Dorsolateral prefrontal cortex (tissue), 120 donors: ENCODE measurements at regions of chr16 and their contacts with region 1.

Region 1: GRCh38 chr16:88737298-88738150 is 31.2 kb downstream of the CTU2 start:
- DNase-seq: peak; percentile 41 to 85 (median 68)
- H3K4me3 ChIP-seq: peak overlapping the region in 10 of 59 donors; percentile 12 to 33 (median 23)
- H3K27ac ChIP-seq: no peak overlapping the region
- H3K27me3 ChIP-seq: no peaks in the 10 kb centered on the region
- CTCF ChIP-seq: peak in 55 of 56 donors; percentile 78 to 99 (median 97)

Region 2: DNA sequence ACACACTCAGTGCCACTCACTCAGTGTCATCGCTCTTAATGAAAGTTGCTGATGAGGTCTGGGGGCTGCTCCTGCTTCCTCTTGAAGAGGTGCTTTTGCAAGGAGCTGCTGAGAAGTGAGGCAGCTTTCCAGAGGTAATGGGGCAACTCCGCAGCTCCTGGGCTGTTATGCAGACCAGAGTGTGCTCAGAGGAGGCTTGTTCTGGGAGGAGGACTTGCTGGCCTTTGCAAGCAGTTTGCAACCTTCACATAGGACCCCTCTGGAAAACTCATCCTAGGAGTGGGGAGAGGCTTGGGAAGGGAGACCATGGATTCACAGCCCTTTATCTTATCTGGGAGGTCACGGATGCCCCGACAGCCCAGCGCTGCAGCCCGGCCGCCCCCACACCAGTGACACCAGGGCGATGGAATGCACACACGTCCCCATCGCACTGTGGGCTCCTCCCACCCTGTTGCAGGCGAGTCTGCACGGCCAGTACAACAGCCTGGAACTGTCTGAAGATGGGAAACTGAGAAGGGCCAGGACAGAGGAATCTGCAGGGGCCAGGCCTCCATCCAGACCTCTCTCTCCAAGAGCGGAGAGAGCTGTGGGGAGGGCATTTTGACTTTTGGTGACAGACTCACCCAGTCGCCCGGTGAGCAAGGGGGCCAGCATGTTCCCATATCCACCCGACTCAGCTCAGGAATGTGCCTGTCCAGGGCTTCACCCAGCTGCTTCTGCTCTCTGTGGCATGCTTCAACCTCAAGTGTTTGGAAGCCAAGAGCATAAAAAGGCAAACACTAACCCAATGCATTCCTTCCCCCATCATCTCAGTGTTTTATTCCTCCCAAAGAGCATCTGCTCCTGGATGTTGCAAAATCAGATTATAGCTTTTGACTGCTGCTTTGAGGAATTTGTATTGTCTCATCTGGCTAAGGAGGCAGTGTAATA is 433.4 kb before region 1 on chr16:
- intact Hi-C with region 1: no loop called
- DNase-seq: no peak
- H3K4me3 ChIP-seq: no peak overlapping the region
- H3K27ac ChIP-seq: no peak overlapping the region
- H3K27me3 ChIP-seq: peaks cover 0 to 2% (median 0%) of the 10 kb centered on the region in 45 donors
- CTCF ChIP-seq: no peak

Region 3: GRCh38 chr16:88803264-88803987 is 65.9 kb after region 1 on chr16 and contains the start of gene CDT1:
- intact Hi-C with region 1: loop called in 1 of 2 experiments (anchors 5 kb)
- DNase-seq: peak in 8 of 10 donors; percentile 44 to 88 (median 67)
- H3K4me3 ChIP-seq: peak within 1 kb of the TSS; percentile 43 to 84 (median 72)
- H3K27ac ChIP-seq: peak within 1 kb of the TSS in 38 of 59 donors; percentile 6 to 87 (median 57)
- H3K27me3 ChIP-seq: no peaks in the 10 kb centered on the region
- CTCF ChIP-seq: peak in 21 of 56 donors; percentile 8 to 44 (median 22)
- total RNA-seq, gene CDT1: 0.49 to 5.3 (median 2.0) TPM

Region 4: GRCh38 chr16:88815901-88816589 is 78.5 kb after region 1 on chr16:
- intact Hi-C with region 1: no loop called
- DNase-seq: peak in 1 of 10 donors; percentile 56
- H3K4me3 ChIP-seq: no peak overlapping the region
- H3K27ac ChIP-seq: no peak overlapping the region
- H3K27me3 ChIP-seq: no peaks in the 10 kb centered on the region
- CTCF ChIP-seq: peak in 54 of 56 donors; percentile 33 to 73 (median 57)

Region 5: DNA sequence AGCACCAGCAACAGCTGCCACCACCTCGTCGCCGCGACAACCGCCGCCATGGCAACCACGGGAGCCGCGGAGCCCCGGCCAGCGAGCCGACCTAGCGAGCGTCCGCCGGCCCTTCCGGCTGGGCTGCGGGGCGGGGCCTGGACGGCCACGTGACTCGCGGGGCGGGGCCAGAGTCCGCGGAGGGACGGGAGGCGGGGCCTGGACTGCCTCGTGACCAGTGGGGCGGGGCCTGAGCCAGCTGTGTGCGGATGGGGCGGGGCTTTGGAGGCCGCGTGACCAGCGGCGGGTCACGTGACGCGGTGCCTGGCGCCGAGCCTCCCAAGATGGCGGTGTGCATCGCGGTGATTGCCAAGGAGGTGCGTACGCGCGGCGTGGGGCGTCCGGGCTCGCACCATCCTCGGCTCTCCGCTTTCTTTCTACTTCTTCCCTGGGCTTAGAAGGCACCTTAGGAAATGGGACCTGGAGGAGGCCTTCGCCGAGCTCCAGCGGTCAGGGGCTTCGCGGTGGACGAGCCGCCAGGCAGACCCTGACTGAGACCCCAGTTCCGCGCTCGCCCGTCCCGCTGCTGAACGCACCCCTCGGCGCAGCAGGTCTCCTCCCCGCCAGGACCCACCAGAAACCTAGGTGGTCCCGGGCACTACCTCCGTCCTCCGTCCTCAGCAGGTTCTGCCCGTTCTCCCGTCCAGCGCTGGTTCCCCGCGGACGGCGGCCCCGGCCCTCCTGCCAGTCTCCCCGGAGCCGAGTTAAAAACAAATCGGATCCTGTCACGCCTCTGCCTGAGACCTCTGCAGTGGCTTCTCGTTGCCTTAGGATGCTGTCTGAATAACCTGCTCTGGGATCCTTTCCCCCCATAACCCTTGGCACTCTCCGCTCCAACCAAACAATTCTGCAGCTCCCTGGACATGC is 119.6 kb after region 1 on chr16 and contains the starts of genes GALNS and TRAPPC2L:
- intact Hi-C with region 1: loop called (anchors 5 to 10 kb)
- DNase-seq: peak; percentile 98 to 100 (median 99)
- H3K4me3 ChIP-seq: peak within 1 kb of the TSS; percentile 66 to 100 (median 97)
- H3K27ac ChIP-seq: peak within 1 kb of the TSS; percentile 85 to 100 (median 97)
- H3K27me3 ChIP-seq: no peaks in the 10 kb centered on the region
- CTCF ChIP-seq: peak in 8 of 56 donors; percentile 6 to 30 (median 10)
- total RNA-seq, gene GALNS: 22.5 to 60.1 (median 36.3) TPM
- total RNA-seq, gene TRAPPC2L: 30.9 to 83.9 (median 57.9) TPM

Region 6: GRCh38 chr16:89171463-89172170 is 434.1 kb after region 1 on chr16 and contains the start of gene CDH15:
- intact Hi-C with region 1: loop called (anchors 5 kb)
- DNase-seq: peak; percentile 67 to 99 (median 82)
- H3K4me3 ChIP-seq: peak within 1 kb of the TSS in 58 of 59 donors; percentile 7 to 60 (median 43)
- H3K27ac ChIP-seq: peak within 1 kb of the TSS in 1 of 59 donors; percentile 91
- H3K27me3 ChIP-seq: peaks cover 0 to 39% (median 6%) of the 10 kb centered on the region in 45 donors
- CTCF ChIP-seq: no peak
- total RNA-seq, gene CDH15: 0.16 to 0.81 (median 0.31) TPM in 14 of 120 experiments, not detected in the others

Region 7: GRCh38 chr16:89217388-89218191 is 480.1 kb after region 1 on chr16 and contains the start of gene ZNF778:
- intact Hi-C with region 1: loop called in 1 of 2 experiments (anchors 5 kb)
- DNase-seq: peak; percentile 70 to 90 (median 82)
- H3K4me3 ChIP-seq: peak within 1 kb of the TSS; percentile 60 to 100 (median 93)
- H3K27ac ChIP-seq: peak within 1 kb of the TSS; percentile 41 to 98 (median 92)
- H3K27me3 ChIP-seq: no peaks in the 10 kb centered on the region
- CTCF ChIP-seq: peak in 32 of 56 donors; percentile 10 to 51 (median 29)
- total RNA-seq, gene ZNF778: 10.1 to 35.3 (median 17.7) TPM